HCT116 (cell line): ENCODE measurements at regions of chr4 and their contacts with region 1.

Region 1: GRCh38 chr4:74098450-74098994 is 473 bp downstream of the CXCL2 start:
- DNase-seq: no peak
- ATAC-seq: no peak
- H3K4me3 ChIP-seq: peak overlapping the region; percentile 59 to 75
- H3K27ac ChIP-seq: peak overlapping the region; percentile 39; the same call in 1 of the 2 replicates
- H3K4me1 ChIP-seq: peaks cover 2 to 23% of the 10 kb centered on the region in 2 experiments; a peak in 2 of 4 replicates
- H3K27me3 ChIP-seq: no peaks in the 10 kb centered on the region
- CTCF ChIP-seq: no peak; a peak in 1 of 6 replicates
- POLR2A ChIP-seq: no peak
- RAD21 ChIP-seq: no peak

Region 2: DNA sequence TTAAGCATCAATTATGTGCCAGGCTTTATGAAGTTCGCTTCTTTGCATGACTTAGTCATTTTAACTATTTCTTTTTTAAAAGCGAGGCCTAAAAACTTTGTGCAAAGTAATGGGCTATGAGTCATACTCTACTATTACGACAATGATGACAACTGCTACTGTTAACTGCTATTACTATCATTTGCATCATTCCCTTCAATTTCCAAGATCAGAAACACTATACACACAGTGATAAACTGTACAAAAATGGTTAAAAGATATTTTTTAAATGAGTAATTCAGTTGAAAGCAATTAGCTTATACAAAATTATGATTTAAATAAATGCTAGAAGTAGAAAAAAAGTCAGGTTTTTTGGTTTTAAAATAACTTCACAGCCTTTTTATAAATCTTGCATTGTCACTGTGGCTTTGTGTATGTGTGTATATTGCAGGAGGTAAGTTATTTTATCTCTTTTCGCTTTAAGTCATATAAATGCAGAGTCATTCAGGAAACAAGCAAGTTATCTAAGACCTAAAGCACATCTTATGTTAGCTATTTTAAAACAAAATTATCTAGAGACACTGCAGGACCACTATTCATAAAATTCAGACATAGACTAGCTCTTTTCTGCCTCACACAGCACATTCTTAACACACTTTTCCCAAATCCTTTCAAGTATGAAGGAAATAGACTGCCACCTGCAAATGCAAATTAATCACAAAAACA is 41.5 kb before region 1 on chr4:
- CTCF ChIA-PET with region 1: no interaction called
- POLR2A ChIA-PET with region 1: interaction called, 6 read pairs
- RAD21 ChIA-PET with region 1: no interaction called
- intact Hi-C with region 1: loop called (anchors 5 kb)
- DNase-seq: peak; percentile 68
- ATAC-seq: peak; percentile 63; the same call in 1 of the 2 replicates
- H3K4me3 ChIP-seq: no peak overlapping the region
- H3K27ac ChIP-seq: peak overlapping the region; percentile 19; the same call in 1 of the 2 replicates
- H3K4me1 ChIP-seq: peaks cover 8 to 15% of the 10 kb centered on the region in 2 experiments
- H3K27me3 ChIP-seq: no peaks in the 10 kb centered on the region
- CTCF ChIP-seq: no peak
- POLR2A ChIP-seq: no peak
- RAD21 ChIP-seq: no peak

Region 3: GRCh38 chr4:74088396-74088795 is 10.1 kb before region 1 on chr4:
- CTCF ChIA-PET with region 1: interaction called, 3 read pairs
- POLR2A ChIA-PET with region 1: interaction called, 11 read pairs
- RAD21 ChIA-PET with region 1: no interaction called
- intact Hi-C with region 1: no loop called
- DNase-seq: no peak
- ATAC-seq: no peak
- H3K4me3 ChIP-seq: no peak overlapping the region
- H3K27ac ChIP-seq: no peak overlapping the region
- H3K4me1 ChIP-seq: no peaks in the 10 kb centered on the region
- H3K27me3 ChIP-seq: no peaks in the 10 kb centered on the region
- CTCF ChIP-seq: no peak
- POLR2A ChIP-seq: no peak
- RAD21 ChIP-seq: no peak

Region 4: DNA sequence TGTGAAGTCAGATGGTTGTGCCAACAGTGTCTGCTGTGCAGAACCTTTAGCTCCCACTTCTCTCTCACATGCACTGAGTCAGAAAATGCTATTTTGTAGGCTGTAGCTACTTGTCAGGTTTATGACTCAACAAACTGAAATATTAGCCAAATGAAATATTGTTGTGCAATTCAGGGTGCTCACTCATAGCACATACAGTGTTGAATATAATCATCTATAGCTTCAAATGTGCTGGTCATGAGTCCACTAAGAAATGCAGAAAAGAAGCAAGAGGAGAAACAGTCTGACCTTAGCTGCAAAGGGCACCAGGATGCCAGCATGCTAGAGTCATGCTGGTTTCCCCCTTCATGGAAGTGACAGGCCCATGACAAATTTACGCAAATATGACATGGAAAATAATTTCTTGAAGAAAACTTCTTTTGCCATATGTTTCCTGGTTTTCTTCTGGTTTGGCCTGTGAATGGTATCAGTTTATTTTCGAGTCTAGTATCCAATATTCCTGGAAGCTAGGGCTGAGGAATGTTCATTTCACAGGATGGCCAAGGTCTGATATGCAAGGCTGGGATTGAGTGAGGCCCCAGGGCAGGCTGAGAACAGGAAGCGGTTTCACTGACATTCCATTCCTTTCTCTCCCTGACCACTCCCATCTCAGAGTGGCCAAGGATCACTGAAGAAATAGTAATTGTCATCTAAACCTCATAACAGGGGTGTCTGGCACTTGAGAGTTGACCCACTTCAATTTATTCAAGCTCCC is 10.8 kb after region 1 on chr4:
- CTCF ChIA-PET with region 1: interaction called, 7 read pairs
- POLR2A ChIA-PET with region 1: interaction called, 25 read pairs
- RAD21 ChIA-PET with region 1: no interaction called
- intact Hi-C with region 1: no loop called
- DNase-seq: peak; percentile 81
- ATAC-seq: peak; percentile 96
- H3K4me3 ChIP-seq: peak overlapping the region in 1 of 2 experiments; percentile 37; a peak in 2 of 4 replicates
- H3K27ac ChIP-seq: peak overlapping the region; percentile 54
- H3K4me1 ChIP-seq: peaks cover 18 to 48% of the 10 kb centered on the region in 2 experiments
- H3K27me3 ChIP-seq: no peaks in the 10 kb centered on the region
- CTCF ChIP-seq: no peak
- POLR2A ChIP-seq: no peak
- RAD21 ChIP-seq: 0 out of 2 replicates have a peak, but pooled peaks have one; percentile 4

Region 5: DNA sequence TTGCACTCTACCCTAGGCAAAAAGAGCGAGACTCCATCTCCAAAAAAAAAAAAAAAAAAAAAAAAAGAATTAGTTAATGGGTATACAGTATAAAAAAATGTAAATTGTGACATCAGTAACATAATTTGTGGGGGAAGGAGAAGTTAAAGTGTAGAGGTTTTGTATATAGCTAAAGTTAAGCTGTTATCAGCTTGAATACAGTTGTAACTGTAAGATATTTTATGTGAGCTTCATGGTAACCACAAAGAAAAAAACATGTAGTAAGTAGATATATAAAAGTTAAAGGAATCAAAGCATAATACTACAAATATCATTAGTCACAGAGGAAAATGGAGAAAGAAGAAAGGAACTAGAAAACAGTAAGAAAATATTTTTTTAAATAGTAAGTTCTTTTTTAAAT is 156.6 kb after region 1 on chr4:
- CTCF ChIA-PET with region 1: no interaction called
- POLR2A ChIA-PET with region 1: no interaction called
- RAD21 ChIA-PET with region 1: no interaction called
- intact Hi-C with region 1: no loop called
- DNase-seq: no peak
- ATAC-seq: no peak
- H3K4me3 ChIP-seq: no peak overlapping the region
- H3K27ac ChIP-seq: no peak overlapping the region
- H3K4me1 ChIP-seq: peaks cover 2 to 5% of the 10 kb centered on the region in 2 experiments; a peak in 1 of 4 replicates
- H3K27me3 ChIP-seq: no peaks in the 10 kb centered on the region
- CTCF ChIP-seq: no peak
- POLR2A ChIP-seq: no peak
- RAD21 ChIP-seq: no peak

Region 6: DNA sequence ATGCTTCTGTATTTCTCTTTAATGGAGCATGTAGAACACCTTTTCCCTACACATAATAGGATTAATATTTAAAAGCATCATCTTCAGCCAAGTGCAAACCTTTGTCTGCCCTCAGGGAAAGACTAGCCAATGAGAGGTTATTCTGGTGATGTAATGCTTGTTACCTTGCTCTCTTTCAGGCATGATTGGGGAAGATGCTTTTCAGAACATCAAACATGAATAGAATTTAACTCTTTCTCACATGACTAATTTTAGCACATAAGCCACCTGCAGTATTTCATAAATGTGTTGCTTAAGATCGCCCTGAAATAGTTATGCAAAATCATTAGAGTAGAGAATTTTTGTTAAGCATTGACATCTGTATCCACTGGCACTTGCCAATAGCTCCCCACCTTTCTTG is 199.0 kb after region 1 on chr4:
- CTCF ChIA-PET with region 1: no interaction called
- POLR2A ChIA-PET with region 1: no interaction called
- RAD21 ChIA-PET with region 1: no interaction called
- intact Hi-C with region 1: no loop called
- DNase-seq: no peak
- ATAC-seq: no peak
- H3K4me3 ChIP-seq: no peak overlapping the region
- H3K27ac ChIP-seq: no peak overlapping the region
- H3K4me1 ChIP-seq: peaks cover 0 to 5% of the 10 kb centered on the region in 2 experiments; a peak in 1 of 4 replicates
- H3K27me3 ChIP-seq: no peaks in the 10 kb centered on the region
- CTCF ChIP-seq: no peak
- POLR2A ChIP-seq: no peak
- RAD21 ChIP-seq: no peak